ENCODE measurements at regions of chr13 and their contacts with region 1.

Region 1: GRCh38 chr13:51452361-51453206 is at the start of gene INTS6:
- H3K4me3 ChIP-seq: peak within 1 kb of the TSS; percentile 73
- H3K27ac ChIP-seq: peak within 1 kb of the TSS; percentile 95
- H3K4me1 ChIP-seq: no peaks in the 10 kb centered on the region; the same call in 1 of the 2 replicates
- CTCF ChIP-seq: no peak

Region 2: DNA sequence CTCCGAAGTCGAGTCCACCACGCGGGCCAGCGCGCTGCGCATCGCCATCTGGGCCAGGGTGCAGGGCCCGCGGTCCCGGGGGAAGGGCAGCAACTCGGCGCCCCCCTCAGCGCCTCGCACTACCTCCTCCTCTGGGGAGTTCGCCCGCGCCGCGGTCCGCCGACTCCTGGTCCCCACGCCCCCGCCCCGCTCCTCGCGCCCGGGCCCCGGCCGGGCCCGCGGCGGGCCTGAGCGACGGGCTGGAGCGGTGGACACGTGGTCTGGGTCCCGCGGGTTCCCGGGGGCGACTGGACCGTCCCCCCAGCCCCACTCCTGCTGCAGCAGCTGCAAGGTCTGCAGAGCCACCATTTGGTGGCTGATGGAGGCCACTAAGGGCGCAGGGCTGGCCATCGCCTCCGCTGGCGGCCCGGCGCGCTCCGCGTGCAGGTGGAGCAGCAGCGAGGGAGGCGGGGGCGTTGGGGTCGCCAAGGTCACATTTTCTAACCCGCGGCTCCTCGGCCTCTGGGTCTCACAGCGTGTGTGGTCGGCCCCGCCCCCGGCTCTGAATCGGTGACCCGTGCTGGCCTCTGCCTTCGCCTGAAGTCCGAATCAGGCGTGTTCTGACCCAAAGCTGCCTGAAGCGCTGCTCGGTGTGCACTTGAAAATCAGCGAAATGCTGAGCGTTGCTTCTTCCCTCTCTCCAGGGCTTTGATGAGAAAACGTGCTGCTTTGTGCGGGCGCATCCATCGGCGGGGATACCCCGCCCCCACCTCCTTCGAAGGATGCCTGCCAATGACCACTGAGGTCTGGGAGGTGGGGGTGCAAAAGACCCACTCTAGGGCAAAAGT is 609.1 kb before region 1 on chr13 and contains the start of gene DLEU7:
- CTCF ChIA-PET with region 1: no interaction called
- POLR2A ChIA-PET with region 1: no interaction called
- H3K4me3 ChIP-seq: no peak within 1 kb of the TSS
- H3K27ac ChIP-seq: no peak within 1 kb of the TSS
- H3K4me1 ChIP-seq: no peaks in the 10 kb centered on the region
- CTCF ChIP-seq: no peak

Region 3: DNA sequence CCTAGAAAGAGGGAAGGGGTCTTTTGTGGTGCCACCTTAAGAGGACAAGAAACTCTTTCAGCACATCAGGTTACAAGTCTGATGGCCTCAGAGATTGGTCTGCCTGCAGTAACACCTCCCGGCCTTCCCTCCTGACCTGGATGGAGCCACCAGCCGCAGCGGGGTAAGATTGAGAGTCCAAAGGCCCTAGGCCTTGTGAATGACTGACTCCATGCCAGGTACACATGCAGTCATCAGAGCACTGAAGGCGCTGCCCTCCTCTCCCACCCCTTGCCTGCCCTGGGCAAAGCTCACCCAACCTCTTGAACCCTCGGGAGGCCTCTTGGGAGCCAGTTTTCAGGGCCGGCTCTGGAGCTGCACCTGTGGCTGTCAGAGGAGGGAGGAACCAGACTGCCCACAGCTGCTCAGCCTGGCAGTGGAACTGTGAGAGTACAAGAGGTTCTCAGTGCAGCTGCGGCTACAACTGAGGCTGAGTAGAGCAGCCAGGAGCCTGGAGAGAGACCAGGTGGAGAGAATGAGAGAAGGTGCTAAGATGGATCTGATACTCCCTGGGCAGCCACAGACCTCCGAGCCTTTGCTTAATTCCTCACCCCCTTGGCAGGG is 317.7 kb before region 1 on chr13:
- CTCF ChIA-PET with region 1: no interaction called
- POLR2A ChIA-PET with region 1: no interaction called
- H3K4me3 ChIP-seq: no peak overlapping the region
- H3K27ac ChIP-seq: no peak overlapping the region
- H3K4me1 ChIP-seq: no peaks in the 10 kb centered on the region
- CTCF ChIP-seq: no peak

Region 4: GRCh38 chr13:51475727-51476501 is 23.3 kb after region 1 on chr13:
- CTCF ChIA-PET with region 1: no interaction called
- POLR2A ChIA-PET with region 1: interaction called, 13 read pairs
- H3K4me3 ChIP-seq: no peak overlapping the region
- H3K27ac ChIP-seq: no peak overlapping the region
- H3K4me1 ChIP-seq: no peaks in the 10 kb centered on the region
- CTCF ChIP-seq: no peak

Region 5: GRCh38 chr13:51583875-51584730 is 131.5 kb after region 1 on chr13 and contains the start of gene WDFY2:
- CTCF ChIA-PET with region 1: interaction called, 3 read pairs
- POLR2A ChIA-PET with region 1: interaction called, 77 read pairs
- H3K4me3 ChIP-seq: peak within 1 kb of the TSS; percentile 65
- H3K27ac ChIP-seq: peak within 1 kb of the TSS; percentile 93
- H3K4me1 ChIP-seq: peaks cover 15% of the 10 kb centered on the region
- CTCF ChIP-seq: no peak

Region 6: GRCh38 chr13:51645154-51645650 is 192.6 kb after region 1 on chr13:
- CTCF ChIA-PET with region 1: no interaction called
- POLR2A ChIA-PET with region 1: interaction called, 10 read pairs
- H3K4me3 ChIP-seq: no peak overlapping the region
- H3K27ac ChIP-seq: no peak overlapping the region
- H3K4me1 ChIP-seq: peaks cover 18% of the 10 kb centered on the region
- CTCF ChIP-seq: no peak

Region 7: DNA sequence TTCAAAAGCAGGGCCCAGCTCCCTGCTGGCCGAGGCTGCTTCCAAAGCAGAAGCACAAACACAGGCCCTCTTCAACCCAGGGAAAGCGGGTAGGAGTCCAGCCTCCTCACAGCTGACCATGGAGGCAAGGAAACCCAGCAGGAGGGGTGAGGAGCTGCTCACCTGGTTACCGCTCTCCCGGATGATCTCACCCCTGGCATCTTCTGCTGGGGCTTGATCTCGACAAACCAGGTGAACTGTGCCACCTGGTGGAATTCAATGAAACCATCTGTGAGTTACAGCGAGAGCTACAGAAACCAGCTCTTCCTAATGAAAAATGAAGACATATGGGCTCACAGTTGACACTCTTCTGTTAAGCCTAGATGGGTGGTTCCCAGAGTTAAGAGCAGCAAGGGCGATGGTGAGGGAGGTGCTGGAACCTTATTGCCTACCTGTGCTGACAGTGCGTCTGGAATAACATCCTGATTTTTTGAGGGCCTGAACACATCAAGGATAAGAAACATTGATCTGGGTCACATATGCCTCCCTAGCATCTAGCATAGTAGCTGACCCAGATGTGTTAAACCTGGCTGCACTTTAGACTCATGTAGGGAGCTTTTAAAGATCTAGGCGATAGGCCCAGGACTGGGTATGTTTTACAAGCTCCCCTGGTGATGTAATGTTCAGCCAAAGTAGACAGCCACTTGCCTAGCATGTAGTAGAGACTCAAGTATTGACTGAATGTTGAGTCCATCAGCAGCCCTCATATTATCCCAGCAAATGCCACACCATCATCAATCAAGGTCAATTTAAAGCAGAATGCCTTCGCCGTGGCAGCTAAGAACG is 345.3 kb after region 1 on chr13:
- CTCF ChIA-PET with region 1: interaction called, 4 read pairs
- POLR2A ChIA-PET with region 1: interaction called, 21 read pairs
- H3K4me3 ChIP-seq: no peak overlapping the region
- H3K27ac ChIP-seq: no peak overlapping the region
- H3K4me1 ChIP-seq: peaks cover 5% of the 10 kb centered on the region
- CTCF ChIP-seq: no peak; the same call in 1 of the 2 replicates

Region 8: DNA sequence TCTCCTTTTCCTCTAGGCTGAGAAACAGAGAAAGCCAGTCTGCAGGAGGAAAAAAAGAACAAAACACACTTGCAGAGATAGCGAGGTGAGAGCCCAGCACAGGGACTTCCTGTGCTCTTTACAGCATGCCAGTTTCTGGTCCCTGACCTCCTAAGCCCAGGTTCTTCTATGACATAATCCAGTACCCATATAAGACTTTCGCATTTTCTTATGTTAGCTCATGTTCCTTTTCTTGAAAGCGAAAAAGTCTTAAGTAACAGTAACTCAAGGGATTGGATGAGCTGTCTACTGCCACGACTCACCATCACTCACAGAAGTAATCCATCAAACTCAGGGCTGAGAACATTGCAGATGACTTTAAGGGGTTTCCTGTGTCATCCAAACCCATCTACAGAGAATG is 426.5 kb after region 1 on chr13:
- CTCF ChIA-PET with region 1: no interaction called
- POLR2A ChIA-PET with region 1: no interaction called
- H3K4me3 ChIP-seq: no peak overlapping the region
- H3K27ac ChIP-seq: no peak overlapping the region
- H3K4me1 ChIP-seq: no peaks in the 10 kb centered on the region
- CTCF ChIP-seq: no peak

Measured in HEK293 (cell line).